AG04450 (cell line): ENCODE measurements at regions of chr1 and their contacts with region 1.

Region 1: DNA sequence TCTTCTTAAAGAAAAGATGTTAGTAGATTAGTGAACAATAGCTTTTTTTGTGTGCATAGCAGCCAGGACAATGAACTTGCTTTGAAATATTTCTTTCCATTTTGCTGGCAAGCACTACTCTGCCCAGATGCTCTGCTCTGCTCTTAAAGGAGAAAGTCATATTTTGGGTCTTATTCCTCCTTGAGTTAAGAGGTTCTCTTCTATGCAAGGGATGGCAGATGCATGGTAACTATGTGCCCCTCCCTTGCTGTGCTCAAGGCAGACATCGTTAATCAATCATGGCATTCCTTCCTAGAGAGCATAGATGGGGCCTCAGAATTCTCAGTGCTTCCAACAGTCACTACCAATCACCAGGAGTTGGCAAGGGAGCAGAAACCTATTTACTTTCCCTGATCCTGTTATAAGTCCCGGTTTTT is 27.6 kb downstream of the NIPAL3 start:
- DNase-seq: no peak
- H3K4me3 ChIP-seq: no peak overlapping the region
- H3K27ac ChIP-seq: no peak overlapping the region
- H3K27me3 ChIP-seq: no peaks in the 10 kb centered on the region
- CTCF ChIP-seq: no peak

Region 2: GRCh38 chr1:24454673-24455072 is 11.4 kb after region 1 on chr1:
- CTCF ChIA-PET with region 1: no interaction called
- POLR2A ChIA-PET with region 1: no interaction called
- DNase-seq: no peak
- H3K4me3 ChIP-seq: no peak overlapping the region
- H3K27ac ChIP-seq: peak overlapping the region; percentile 42
- H3K27me3 ChIP-seq: no peaks in the 10 kb centered on the region
- CTCF ChIP-seq: no peak

Region 3: DNA sequence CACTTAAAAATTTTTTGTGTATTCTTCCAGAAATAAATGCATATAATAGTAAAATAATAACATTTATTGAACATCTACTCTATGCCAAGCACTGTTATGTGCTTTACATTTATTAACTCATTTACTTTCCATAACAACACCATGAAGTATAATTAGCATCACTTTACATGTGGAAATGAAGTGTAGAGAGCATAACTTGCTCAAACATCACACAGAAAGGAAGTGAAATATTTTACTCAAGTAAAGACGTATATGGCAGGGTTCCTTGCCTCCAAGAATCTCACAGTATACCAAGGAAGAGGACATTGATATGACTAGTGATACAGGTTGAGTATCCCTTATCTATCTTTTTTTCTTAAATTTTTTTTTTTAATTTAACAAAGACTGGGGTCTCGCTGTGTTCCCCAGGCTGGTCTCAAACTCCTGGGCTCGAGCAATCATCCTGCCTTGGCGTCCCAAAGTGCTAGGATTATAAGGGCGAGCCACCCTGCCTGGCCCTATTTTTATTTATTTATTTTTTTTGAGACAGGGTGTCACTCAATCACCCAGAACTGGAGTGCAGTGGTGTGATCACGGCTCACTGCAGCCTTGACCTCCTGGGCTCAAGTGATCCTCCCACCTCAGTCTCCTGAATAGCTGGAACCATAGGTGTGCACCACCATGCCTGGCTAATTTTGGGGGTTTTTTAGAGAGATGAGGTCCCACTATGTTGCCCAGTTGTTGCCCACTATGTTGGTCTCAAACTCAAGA is 294.3 kb after region 1 on chr1:
- CTCF ChIA-PET with region 1: no interaction called
- POLR2A ChIA-PET with region 1: no interaction called
- DNase-seq: no peak
- H3K4me3 ChIP-seq: no peak overlapping the region
- H3K27ac ChIP-seq: no peak overlapping the region
- H3K27me3 ChIP-seq: no peaks in the 10 kb centered on the region
- CTCF ChIP-seq: no peak

Region 4: DNA sequence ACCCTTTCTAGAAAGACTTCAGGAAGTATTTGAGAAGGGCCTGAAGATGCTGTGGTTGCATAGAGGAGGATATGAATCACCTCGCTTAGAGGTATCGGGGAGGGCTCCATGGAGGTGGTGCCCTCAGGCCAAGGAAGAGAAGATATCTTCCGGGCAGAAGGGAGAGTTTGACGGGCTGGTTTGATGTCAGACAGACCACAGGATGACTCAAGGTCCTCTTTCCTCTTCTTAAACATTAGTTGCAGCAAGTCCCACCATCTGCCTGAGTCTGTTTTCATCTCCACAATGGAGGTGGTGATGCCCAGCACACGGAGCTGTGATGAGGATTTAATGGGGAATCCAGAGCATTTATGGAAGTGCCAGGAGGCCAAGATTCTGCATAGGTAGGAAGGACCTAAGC is 511.9 kb after region 1 on chr1:
- CTCF ChIA-PET with region 1: no interaction called
- POLR2A ChIA-PET with region 1: interaction called, 12 read pairs
- DNase-seq: peak; percentile 11
- H3K4me3 ChIP-seq: no peak overlapping the region
- H3K27ac ChIP-seq: no peak overlapping the region
- H3K27me3 ChIP-seq: peaks cover 10% of the 10 kb centered on the region
- CTCF ChIP-seq: no peak